Common myeloid progenitor, CD34-positive (primary cell): ENCODE measurements at regions of chr4 and their contacts with region 1.

Region 1: DNA sequence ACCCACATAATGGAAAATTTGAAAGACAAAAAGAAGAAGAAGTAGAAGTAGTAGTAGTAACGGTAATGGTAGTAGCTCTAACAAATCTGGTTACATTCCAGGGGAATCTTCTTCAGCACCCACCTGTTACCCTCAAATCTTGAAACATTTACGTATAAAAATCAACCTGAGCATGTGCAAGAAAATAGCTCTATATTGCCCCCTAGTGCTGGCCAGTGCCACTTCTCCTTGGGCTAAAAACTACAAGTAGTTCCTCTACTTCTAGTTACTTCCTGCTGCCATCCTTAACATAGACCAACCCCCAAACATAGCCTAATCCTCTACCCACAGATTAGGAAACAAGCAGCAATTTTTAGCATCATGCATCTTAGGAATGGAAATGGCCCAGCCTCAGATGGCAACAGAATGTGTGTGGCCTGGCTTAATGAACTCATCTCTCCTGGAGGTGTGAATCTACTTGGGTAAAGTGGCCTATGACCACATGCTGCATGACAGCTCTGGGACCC is 3.1 kb downstream of the PDGFC start:
- DNase-seq: peak; percentile 89 to 95 (median 93)
- H3K4me3 ChIP-seq: peak overlapping the region in 6 of 7 experiments; percentile 74 to 92 (median 86)
- H3K27ac ChIP-seq: no peak overlapping the region
- H3K4me1 ChIP-seq: peaks cover 25 to 60% (median 47%) of the 10 kb centered on the region in 4 experiments
- H3K27me3 ChIP-seq: no peaks in the 10 kb centered on the region

Region 2: GRCh38 chr4:156475322-156475721 is 493.2 kb before region 1 on chr4:
- CTCF ChIA-PET with region 1: interaction called, 70 read pairs
- POLR2A ChIA-PET with region 1: no interaction called
- DNase-seq: peak; percentile 52 to 71 (median 68)
- H3K4me3 ChIP-seq: no peak overlapping the region
- H3K27ac ChIP-seq: no peak overlapping the region
- H3K4me1 ChIP-seq: peaks cover 0 to 4% (median 1%) of the 10 kb centered on the region in 4 experiments
- H3K27me3 ChIP-seq: no peaks in the 10 kb centered on the region

Region 3: GRCh38 chr4:156654410-156654809 is 314.1 kb before region 1 on chr4:
- CTCF ChIA-PET with region 1: no interaction called
- POLR2A ChIA-PET with region 1: no interaction called
- DNase-seq: no peak
- H3K4me3 ChIP-seq: no peak overlapping the region
- H3K27ac ChIP-seq: no peak overlapping the region
- H3K4me1 ChIP-seq: no peaks in the 10 kb centered on the region
- H3K27me3 ChIP-seq: no peaks in the 10 kb centered on the region

Region 4: GRCh38 chr4:156983366-156983765 is 14.8 kb after region 1 on chr4:
- CTCF ChIA-PET with region 1: interaction called, 28 read pairs
- POLR2A ChIA-PET with region 1: no interaction called
- DNase-seq: peak; percentile 34 to 68 (median 63)
- H3K4me3 ChIP-seq: no peak overlapping the region
- H3K27ac ChIP-seq: no peak overlapping the region
- H3K4me1 ChIP-seq: no peaks in the 10 kb centered on the region
- H3K27me3 ChIP-seq: no peaks in the 10 kb centered on the region